ENCODE measurements at regions of chr3 and their contacts with region 1.

Region 1: DNA sequence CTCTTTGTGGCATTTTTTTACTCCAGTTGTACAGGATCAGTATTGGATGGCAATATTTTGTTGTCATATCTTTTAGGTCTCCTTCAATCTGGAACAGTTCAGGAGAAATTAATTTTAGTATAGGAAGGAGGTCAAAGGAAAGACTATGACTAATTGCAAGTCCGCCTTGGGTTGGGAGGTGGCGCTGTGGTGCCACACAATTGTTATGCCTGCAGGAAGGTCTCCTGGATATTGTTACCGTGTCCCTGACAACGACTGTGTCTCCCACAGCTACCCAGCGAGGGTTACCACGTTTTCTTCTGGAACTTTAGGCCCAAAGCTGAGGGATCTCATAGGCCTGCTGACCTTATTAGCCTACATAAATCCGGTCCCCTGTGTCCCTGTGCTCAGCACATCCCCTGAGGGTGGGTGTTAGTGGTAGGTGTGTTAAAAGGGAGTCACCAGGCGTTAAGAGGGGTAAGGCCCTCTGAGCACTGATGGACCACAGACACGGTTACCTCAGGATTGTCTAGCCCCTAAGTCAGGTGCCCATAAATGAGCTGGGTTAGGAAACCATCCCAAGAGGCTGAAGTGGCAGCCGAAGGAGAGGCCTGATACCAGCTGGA is 31.5 kb downstream of the KCNAB1 start:
- DNase-seq: peak; percentile 67
- H3K4me3 Mint-ChIP-seq: no peak overlapping the region
- H3K27ac Mint-ChIP-seq: no peak overlapping the region
- H3K4me1 Mint-ChIP-seq: peaks cover 7% of the 10 kb centered on the region
- H3K27me3 Mint-ChIP-seq: peaks cover 3% of the 10 kb centered on the region

Region 2: DNA sequence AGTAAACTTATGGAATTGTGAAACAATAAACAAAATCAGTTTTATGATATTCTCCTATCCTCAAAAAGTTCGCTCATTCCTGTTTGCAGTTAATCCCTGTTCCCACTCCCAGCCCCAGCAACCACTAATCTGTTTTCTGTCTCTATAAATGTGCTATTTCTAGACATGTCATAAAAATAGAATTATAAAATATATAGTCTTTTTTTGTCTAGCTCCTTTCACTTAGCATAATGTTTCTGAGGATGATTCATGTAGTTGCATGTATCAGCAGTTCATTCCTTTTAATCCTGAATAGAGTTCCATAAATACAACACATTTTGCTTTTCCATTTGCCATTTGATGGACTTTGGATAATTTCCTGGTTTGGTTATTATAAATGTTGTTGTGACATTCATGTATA is 108.4 kb after region 1 on chr3:
- CTCF ChIA-PET with region 1: no interaction called
- POLR2A ChIA-PET with region 1: no interaction called
- DNase-seq: no peak
- H3K4me3 Mint-ChIP-seq: no peak overlapping the region
- H3K27ac Mint-ChIP-seq: no peak overlapping the region
- H3K4me1 Mint-ChIP-seq: no peaks in the 10 kb centered on the region
- H3K27me3 Mint-ChIP-seq: peaks cover 9% of the 10 kb centered on the region

Region 3: GRCh38 chr3:156382458-156383346 is 230.8 kb after region 1 on chr3:
- CTCF ChIA-PET with region 1: interaction called, 20 read pairs
- POLR2A ChIA-PET with region 1: no interaction called
- DNase-seq: no peak
- H3K4me3 Mint-ChIP-seq: no peak overlapping the region
- H3K27ac Mint-ChIP-seq: no peak overlapping the region
- H3K4me1 Mint-ChIP-seq: no peaks in the 10 kb centered on the region
- H3K27me3 Mint-ChIP-seq: peaks cover 30% of the 10 kb centered on the region

Region 4: DNA sequence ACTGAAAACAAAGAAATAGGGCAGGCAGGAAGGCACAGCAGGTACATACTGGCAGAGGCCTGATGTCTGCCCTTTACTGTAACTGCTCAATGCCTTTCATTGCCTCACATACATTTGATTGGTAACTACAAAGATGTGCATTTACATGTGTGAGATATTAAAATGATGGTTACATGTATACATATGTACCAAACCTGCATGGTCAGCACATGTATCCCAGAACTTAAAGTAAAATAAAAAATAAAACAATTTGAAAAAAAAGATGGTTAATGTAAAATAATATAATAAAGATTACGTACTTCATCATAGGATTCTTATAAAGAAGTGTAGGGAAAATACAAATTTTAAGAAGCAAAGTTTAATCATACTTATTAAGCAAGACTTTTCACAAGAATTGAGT is 387.9 kb after region 1 on chr3:
- CTCF ChIA-PET with region 1: interaction called, 11 read pairs
- POLR2A ChIA-PET with region 1: no interaction called
- DNase-seq: no peak
- H3K4me3 Mint-ChIP-seq: no peak overlapping the region
- H3K27ac Mint-ChIP-seq: no peak overlapping the region
- H3K4me1 Mint-ChIP-seq: peaks cover 9% of the 10 kb centered on the region
- H3K27me3 Mint-ChIP-seq: no peaks in the 10 kb centered on the region

Region 5: DNA sequence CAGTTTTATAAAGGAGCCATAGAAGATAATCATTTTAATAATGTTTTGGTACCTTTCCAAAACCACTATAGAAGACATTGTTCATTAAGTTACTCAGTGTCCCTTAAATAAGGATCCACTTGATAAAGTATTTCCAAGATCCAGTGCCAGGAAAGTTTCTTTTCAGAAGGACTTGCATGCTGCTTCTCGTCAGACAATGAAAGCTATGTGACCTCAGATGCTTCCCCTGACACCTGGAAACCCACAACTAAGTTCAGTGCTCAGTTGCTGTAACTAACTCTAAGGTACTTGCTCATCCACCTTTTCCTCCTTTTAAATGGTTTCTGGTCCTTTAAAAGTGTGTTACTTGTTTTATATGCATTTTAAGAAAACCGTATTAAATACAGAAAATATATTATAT is 395.7 kb after region 1 on chr3:
- CTCF ChIA-PET with region 1: interaction called, 11 read pairs
- POLR2A ChIA-PET with region 1: no interaction called
- DNase-seq: no peak
- H3K4me3 Mint-ChIP-seq: no peak overlapping the region
- H3K27ac Mint-ChIP-seq: no peak overlapping the region
- H3K4me1 Mint-ChIP-seq: peaks cover 54% of the 10 kb centered on the region
- H3K27me3 Mint-ChIP-seq: no peaks in the 10 kb centered on the region